Lower lobe of right lung (tissue), 2 donors: ENCODE measurements at regions of chr10 and their contacts with region 1.

Region 1: DNA sequence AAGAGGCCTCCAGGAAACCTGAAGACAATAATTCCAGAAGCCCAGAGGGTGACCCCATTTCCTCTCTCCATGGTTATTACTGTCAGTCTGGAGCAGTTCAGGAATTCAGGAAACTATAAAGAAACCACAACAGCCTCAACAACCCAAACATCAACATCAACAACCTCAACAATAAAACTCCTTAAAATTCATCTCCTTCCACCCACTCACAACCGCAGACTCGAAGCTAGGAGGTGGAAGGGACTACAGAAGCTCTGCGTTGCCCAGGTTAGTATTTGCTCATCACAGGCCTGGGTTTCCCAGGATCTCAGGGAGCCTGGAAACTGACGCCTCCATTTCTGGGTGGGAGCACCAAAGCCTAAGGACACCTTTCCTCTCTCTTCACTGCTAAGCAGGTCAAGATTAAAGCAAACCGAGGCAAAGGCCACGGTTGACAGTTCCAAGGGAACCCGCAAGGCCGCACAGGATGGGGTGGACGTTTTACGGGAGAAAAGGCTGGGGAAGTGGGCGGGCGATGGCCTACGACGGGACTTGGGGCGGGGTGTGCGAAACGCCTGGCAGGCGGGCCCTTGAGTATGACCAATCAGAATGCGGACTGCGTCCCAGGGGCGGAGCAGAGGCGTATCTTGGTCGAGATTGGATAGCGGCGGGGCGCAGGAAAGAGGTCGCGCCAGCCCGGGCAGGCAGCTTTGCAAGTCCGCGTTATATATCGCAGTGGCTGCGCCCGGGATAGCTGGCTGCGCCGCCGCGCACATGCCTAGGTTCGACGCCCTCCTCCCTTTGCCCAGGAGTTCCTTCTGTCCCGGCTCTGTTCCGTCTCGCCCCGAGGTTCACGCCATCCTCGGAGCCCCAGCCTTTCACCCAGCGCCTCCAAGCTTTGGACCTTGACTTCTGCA is at the start of gene ELOVL3:
- DNase-seq: peak; percentile 96
- ATAC-seq: peak; percentile 95
- H3K4me3 ChIP-seq: peak within 1 kb of the TSS; percentile 48
- H3K27ac ChIP-seq: peak within 1 kb of the TSS; percentile 67
- H3K4me1 ChIP-seq: peaks cover 38% of the 10 kb centered on the region
- H3K27me3 ChIP-seq: peaks cover 8% of the 10 kb centered on the region
- CTCF ChIP-seq: peak; percentile 9
- total RNA-seq, gene ELOVL3: 0.92 TPM

Region 2: DNA sequence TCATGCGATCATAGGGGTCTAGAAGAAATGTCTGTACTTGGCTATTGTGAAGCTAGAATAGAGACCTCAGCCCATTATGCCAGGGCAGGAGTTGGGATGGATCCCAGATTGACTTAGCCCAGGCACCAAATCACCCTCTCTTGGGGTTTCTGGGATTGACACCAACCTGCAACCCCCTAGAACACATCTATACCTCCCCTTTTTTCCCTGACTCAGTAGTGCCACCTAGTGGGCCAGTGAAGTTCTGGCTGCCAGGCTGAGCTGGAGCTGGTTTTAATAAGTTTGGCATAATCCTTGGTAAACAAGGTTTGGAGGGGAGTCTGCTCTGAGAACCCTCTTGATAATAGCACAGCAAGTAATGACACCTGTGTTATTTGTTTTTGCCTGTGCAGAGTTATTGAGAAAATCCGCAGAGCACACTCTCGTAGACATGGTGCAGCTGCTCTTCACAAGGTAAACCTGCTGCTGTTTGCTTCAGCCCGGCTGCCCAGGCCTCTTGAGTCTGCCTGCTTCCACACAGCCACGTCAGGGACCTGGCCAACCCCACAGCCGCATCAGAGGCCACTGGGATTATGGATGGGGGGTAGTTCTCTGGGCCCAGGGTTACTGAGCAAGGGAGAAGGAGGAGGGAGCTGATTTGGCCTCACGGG is 126.3 kb after region 1 on chr10:
- intact Hi-C with region 1: loop called (anchors 5 kb)
- DNase-seq: peak; percentile 58
- ATAC-seq: peak; percentile 74 to 81
- H3K4me3 ChIP-seq: no peak overlapping the region
- H3K27ac ChIP-seq: no peak overlapping the region
- H3K4me1 ChIP-seq: no peaks in the 10 kb centered on the region
- H3K27me3 ChIP-seq: no peaks in the 10 kb centered on the region
- CTCF ChIP-seq: peak; percentile 85